Activated CD4-positive, alpha-beta T cell treated with anti-CD3 and anti-CD28 coated beads for 36 hours (primary cell): ENCODE measurements at regions of chr4 and their contacts with region 1.

Region 1: GRCh38 chr4:23373261-23373660 is 516.6 kb downstream of the PPARGC1A start:
- DNase-seq: peak; percentile 51
- ATAC-seq: peak; percentile 100
- H3K4me3 Mint-ChIP-seq: no peak overlapping the region
- H3K27ac Mint-ChIP-seq: no peak overlapping the region
- H3K4me1 Mint-ChIP-seq: peaks cover 2% of the 10 kb centered on the region
- H3K27me3 Mint-ChIP-seq: no peaks in the 10 kb centered on the region

Region 2: DNA sequence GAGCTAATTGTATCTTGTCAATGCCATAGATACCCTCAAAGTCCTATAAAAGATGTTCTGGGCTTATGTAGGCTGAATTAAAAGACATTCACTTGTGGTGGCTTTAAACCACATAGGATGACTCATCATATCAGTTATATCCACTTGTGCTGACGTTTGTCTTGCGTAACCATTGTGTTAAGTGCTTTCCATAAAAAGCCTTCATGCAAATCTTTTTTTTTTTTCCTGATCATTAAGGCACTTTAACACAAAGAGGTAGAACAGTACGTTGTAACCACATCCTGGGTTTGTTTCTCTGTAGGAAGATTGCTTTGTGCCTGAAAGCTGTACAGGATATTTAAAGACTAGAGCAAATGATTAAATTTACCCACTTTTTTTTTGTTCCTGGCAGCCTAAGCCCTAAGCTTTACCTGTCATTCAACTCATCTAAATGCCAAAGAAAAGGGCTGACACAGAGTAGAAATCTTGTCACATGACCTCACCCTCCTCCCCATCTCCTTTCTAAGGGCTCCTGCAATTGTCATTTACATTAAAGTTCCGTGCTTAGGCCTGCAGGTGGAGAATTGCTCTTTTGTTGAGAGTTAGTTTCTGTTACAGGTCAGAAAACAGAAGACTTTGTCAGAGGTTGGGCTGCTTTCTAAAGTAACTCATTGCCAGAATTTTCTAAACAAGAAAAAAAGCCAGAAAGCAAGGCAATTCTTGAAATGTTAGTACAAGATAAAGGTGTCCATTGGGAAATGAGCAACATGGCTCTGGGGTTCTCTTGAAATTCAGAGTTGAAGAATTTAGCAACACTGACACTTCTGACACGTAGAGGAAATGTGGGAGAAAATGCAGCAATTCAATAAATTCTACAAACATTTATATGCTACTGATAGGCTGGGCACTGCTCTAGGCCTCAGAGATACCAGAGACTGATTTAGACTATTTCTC is 39.0 kb before region 1 on chr4:
- CTCF ChIA-PET with region 1: no interaction called
- POLR2A ChIA-PET with region 1: no interaction called
- intact Hi-C with region 1: loop called in 1 of 2 experiments (anchors 1 kb)
- DNase-seq: peak; percentile 49
- ATAC-seq: peak; percentile 89
- H3K4me3 Mint-ChIP-seq: peak overlapping the region; percentile 45
- H3K27ac Mint-ChIP-seq: peak overlapping the region; percentile 92
- H3K4me1 Mint-ChIP-seq: peaks cover 29% of the 10 kb centered on the region
- H3K27me3 Mint-ChIP-seq: no peaks in the 10 kb centered on the region